ENCODE measurements at regions of chr10 and their contacts with region 1.

Region 1: GRCh38 chr10:44864637-44865288 is 46.4 kb upstream of the TMEM72 start:
- DNase-seq: peak; percentile 56
- ATAC-seq: peak; percentile 98
- H3K4me3 ChIP-seq: peak overlapping the region; percentile 53 to 54
- H3K27ac ChIP-seq: peak overlapping the region; percentile 55
- H3K4me1 ChIP-seq: peaks cover 4% of the 10 kb centered on the region; the same call in 1 of the 2 replicates
- H3K27me3 ChIP-seq: peaks cover 17% of the 10 kb centered on the region
- CTCF ChIP-seq: peak; percentile 99

Region 2: DNA sequence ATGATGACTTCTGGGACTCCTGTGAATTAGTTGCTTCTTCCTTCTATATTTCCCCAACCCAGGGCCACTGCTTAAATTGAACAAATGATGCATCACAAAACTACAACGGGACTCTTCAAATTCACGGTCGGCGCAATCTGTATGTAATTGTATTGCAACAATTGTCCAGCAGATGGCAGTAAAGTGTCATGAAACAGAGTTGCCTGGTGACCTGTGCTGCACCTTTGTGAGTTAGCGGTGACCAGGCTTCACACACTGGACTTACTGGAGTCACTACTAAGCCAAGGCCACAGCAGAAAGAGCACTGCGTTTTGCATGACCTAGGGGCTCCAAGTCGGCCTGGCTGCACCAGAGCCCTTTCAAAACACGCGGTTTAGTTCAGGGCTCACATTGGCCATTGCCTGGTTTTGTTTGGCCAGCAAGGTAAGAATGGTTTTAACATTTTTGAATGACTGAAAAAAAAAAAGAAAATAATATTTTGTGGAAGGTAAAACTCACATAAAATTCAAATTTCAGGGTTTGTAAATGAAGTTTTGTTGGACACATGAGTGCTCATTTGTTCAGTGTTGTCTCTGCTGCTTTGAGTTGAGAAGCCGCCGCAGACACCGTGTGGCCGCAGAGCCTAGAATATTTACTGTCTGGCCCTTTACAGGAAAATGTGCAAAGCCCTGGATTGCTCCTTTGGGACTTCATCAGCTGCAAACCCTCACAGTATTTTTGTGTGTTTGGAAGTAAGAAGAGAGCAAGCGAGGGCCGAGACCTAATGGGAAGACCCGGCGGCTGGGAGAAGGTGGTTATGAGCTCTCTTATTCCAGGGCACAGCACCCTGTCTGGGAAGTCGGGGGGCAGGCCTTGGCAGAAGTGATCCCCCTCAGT is 1192.9 kb before region 1 on chr10:
- CTCF ChIA-PET with region 1: no interaction called
- POLR2A ChIA-PET with region 1: no interaction called
- in situ Hi-C with region 1: no loop called
- intact Hi-C with region 1: loop called (anchors 2 kb)
- DNase-seq: peak; percentile 64
- ATAC-seq: peak; percentile 89
- H3K4me3 ChIP-seq: no peak overlapping the region
- H3K27ac ChIP-seq: no peak overlapping the region
- H3K4me1 ChIP-seq: no peaks in the 10 kb centered on the region
- H3K27me3 ChIP-seq: peaks cover 6% of the 10 kb centered on the region; the same call in 1 of the 2 replicates
- CTCF ChIP-seq: peak; percentile 87

Region 3: DNA sequence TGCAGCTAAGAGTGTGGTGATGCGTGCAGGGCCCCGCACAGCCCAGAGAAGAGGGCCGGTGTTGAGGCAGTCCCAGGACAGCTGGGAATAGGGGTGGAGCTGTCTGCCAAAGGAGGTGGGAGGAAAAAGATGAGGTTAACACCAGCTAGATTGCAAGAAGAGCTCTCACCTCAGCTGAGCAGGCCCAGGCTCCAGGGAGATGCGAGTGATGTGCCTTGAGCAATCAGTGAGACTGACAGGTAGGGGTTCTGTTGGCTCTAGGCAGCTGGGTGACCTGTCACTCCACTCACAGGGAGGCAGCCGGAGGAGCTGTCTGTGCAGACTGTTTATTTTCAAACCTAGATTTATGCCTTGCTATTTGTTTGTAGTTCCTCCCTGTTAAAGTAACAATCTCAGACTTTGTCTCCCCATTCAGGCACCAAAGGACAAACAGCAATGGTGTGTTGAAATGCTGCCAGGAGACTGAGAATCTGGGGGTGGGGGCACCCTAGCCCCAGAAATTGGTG is 274.8 kb before region 1 on chr10:
- CTCF ChIA-PET with region 1: no interaction called
- POLR2A ChIA-PET with region 1: no interaction called
- in situ Hi-C with region 1: no loop called
- intact Hi-C with region 1: loop called (anchors 10 kb)
- DNase-seq: no peak
- ATAC-seq: no peak
- H3K4me3 ChIP-seq: no peak overlapping the region
- H3K27ac ChIP-seq: no peak overlapping the region
- H3K4me1 ChIP-seq: no peaks in the 10 kb centered on the region
- H3K27me3 ChIP-seq: 0 out of 2 replicates have a peak, but pooled peaks cover 7% of the 10 kb centered on the region
- CTCF ChIP-seq: no peak